Activated CD4-positive, alpha-beta T cell treated with anti-CD3 and anti-CD28 coated beads, Interleukin-2, amount 10 ng/mL, durations not matched to agents 24 days and 14 days (primary cell): ENCODE measurements at regions of chr11 and their contacts with region 1.

Region 1: GRCh38 chr11:58958500-58958899 is 19.2 kb downstream of the GLYATL1 start:
- DNase-seq: peak; percentile 73
- H3K4me3 Mint-ChIP-seq: no peak overlapping the region
- H3K27ac Mint-ChIP-seq: no peak overlapping the region
- H3K4me1 Mint-ChIP-seq: peaks cover 2% of the 10 kb centered on the region
- H3K27me3 Mint-ChIP-seq: peaks cover 3% of the 10 kb centered on the region

Region 2: GRCh38 chr11:58165504-58166106 is 792.9 kb before region 1 on chr11:
- intact Hi-C with region 1: no loop called
- DNase-seq: no peak
- H3K4me3 Mint-ChIP-seq: no peak overlapping the region
- H3K27ac Mint-ChIP-seq: no peak overlapping the region
- H3K4me1 Mint-ChIP-seq: no peaks in the 10 kb centered on the region
- H3K27me3 Mint-ChIP-seq: peaks cover 2% of the 10 kb centered on the region

Region 3: DNA sequence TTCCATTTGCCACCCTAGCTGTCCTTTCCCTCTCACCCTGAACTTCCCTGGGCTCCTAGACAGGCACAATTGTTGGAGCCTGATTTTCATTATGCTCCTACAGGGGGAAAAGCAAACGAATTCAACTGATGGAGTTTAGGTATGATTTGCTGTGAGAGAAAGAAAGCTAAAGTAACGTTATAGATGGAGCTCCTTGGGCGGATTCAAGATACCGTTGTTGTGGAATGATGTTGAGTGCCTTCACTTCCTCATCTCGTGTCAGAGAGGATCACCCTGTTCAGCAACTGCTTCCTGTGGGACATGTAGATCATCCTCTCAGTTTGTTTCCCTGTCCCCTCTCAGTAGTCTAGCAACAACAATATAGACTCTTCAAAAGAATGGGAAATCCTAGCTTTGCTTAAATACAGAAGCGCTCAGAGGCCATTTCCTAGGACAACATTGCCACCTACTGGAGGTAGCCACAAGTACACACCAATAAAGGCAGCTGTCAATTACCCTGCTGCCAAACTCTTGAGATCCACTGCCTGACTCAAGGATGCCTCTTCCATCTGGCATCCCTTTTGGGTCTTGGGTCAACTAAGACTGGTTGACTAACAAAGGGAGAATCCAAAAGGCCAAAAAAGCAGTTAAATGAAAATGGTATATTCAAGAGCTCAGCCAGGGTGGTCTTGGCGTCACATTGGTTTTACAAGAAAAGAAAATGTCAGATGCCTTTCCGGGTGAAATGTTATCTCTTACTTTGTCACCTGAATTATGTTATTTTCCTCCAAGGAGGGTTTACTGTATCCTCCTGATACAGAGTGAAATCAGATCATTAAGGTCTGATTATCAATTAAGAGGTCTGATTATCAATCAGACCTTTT is 199.9 kb after region 1 on chr11:
- intact Hi-C with region 1: loop called (anchors 10 kb)
- DNase-seq: peak; percentile 90
- H3K4me3 Mint-ChIP-seq: no peak overlapping the region
- H3K27ac Mint-ChIP-seq: no peak overlapping the region
- H3K4me1 Mint-ChIP-seq: peaks cover 7% of the 10 kb centered on the region
- H3K27me3 Mint-ChIP-seq: peaks cover 15% of the 10 kb centered on the region